Pancreas (tissue), 10 donors: ENCODE measurements at regions of chr11 and their contacts with region 1.

Region 1: GRCh38 chr11:83306200-83307080 is 20.3 kb upstream of the CCDC90B start:
- DNase-seq: no peak
- ATAC-seq: no peak
- H3K4me3 ChIP-seq: no peak overlapping the region
- H3K27ac ChIP-seq: no peak overlapping the region
- H3K4me1 ChIP-seq: no peaks in the 10 kb centered on the region
- H3K27me3 ChIP-seq: no peaks in the 10 kb centered on the region
- CTCF ChIP-seq: no peak

Region 2: GRCh38 chr11:83265331-83265730 is 41.1 kb before region 1 on chr11:
- intact Hi-C with region 1: no loop called
- DNase-seq: no peak
- ATAC-seq: no peak
- H3K4me3 ChIP-seq: no peak overlapping the region
- H3K27ac ChIP-seq: no peak overlapping the region
- H3K4me1 ChIP-seq: no peaks in the 10 kb centered on the region
- H3K27me3 ChIP-seq: no peaks in the 10 kb centered on the region
- CTCF ChIP-seq: no peak

Region 3: DNA sequence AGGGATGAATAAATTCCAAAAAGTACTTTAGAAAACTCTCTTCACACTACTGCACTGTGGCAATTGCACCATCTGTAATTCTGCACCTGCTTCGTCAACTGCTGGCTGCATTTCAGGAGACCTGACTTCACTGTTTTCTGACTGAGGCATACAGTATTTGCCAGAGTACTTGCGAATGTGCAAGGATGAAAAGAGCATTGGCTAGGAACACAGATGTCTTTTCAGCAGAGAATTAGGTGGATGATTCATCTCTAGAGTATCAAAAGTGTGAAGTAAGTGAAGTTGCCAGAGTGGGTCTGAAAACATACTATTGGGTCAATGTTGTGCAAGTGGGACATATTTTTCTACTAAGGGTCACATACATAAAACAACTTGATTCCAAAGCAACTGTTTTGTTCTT is 407.3 kb after region 1 on chr11:
- intact Hi-C with region 1: loop called in 1 of 3 experiments (anchors 10 kb)
- DNase-seq: peak in 4 of 6 donors; percentile 19 to 48 (median 30)
- ATAC-seq: peak; percentile 68 to 86 (median 72)
- H3K4me3 ChIP-seq: no peak overlapping the region
- H3K27ac ChIP-seq: no peak overlapping the region
- H3K4me1 ChIP-seq: no peaks in the 10 kb centered on the region
- H3K27me3 ChIP-seq: no peaks in the 10 kb centered on the region
- CTCF ChIP-seq: no peak